CD14-positive monocyte (primary cell): ENCODE measurements at regions of chr3 and their contacts with region 1.

Region 1: GRCh38 chr3:11335056-11335608 is 62.9 kb downstream of the ATG7 start:
- DNase-seq: peak; percentile 9 to 27 (median 19)
- H3K4me3 ChIP-seq: no peak overlapping the region
- H3K4me3 Mint-ChIP-seq: no peak overlapping the region
- H3K27ac ChIP-seq: no peak overlapping the region
- H3K27ac Mint-ChIP-seq: no peak overlapping the region
- H3K4me1 ChIP-seq: no peaks in the 10 kb centered on the region
- H3K4me1 Mint-ChIP-seq: no peaks in the 10 kb centered on the region
- H3K27me3 ChIP-seq: no peaks in the 10 kb centered on the region
- H3K27me3 Mint-ChIP-seq: no peaks in the 10 kb centered on the region
- CTCF ChIP-seq: peak; percentile 61

Region 2: DNA sequence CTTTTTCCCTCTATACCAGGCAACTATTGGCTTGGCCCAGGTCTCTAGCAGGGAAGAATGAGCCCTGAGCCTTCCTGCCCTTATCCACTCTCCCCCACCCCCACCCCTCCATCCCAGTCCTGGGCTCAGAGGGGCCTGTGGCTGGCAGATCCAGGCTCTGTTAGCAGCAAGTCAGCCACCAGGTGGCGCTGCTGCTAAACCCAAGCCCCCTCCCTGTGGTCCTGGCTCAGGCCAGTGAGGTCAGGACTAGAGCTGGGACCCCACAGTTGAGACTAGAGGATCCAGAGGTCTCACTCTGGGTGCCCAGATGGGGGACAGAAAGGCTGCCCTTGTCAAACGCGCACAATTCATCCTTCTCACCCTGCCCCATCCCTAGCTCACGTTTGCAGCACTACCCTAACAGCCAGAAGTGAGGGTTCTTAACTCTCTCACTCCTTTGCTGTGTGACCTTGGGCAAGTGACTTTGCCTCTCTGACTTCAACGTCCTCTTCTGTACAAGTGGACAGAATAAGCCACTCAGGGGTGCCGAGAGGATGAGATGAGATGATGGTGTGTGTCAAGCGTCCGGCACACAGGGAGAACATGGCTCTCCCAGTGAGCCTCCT is 389.3 kb before region 1 on chr3:
- intact Hi-C with region 1: loop called in 1 of 2 experiments (anchors 10 kb)
- DNase-seq: peak; percentile 39 to 54 (median 53)
- H3K4me3 ChIP-seq: no peak overlapping the region
- H3K4me3 Mint-ChIP-seq: no peak overlapping the region
- H3K27ac ChIP-seq: no peak overlapping the region
- H3K27ac Mint-ChIP-seq: no peak overlapping the region
- H3K4me1 ChIP-seq: no peaks in the 10 kb centered on the region
- H3K4me1 Mint-ChIP-seq: no peaks in the 10 kb centered on the region
- H3K27me3 ChIP-seq: no peaks in the 10 kb centered on the region
- H3K27me3 Mint-ChIP-seq: peaks cover 2 to 10% (median 6%) of the 10 kb centered on the region in 3 donors
- CTCF ChIP-seq: peak; percentile 86

Region 3: DNA sequence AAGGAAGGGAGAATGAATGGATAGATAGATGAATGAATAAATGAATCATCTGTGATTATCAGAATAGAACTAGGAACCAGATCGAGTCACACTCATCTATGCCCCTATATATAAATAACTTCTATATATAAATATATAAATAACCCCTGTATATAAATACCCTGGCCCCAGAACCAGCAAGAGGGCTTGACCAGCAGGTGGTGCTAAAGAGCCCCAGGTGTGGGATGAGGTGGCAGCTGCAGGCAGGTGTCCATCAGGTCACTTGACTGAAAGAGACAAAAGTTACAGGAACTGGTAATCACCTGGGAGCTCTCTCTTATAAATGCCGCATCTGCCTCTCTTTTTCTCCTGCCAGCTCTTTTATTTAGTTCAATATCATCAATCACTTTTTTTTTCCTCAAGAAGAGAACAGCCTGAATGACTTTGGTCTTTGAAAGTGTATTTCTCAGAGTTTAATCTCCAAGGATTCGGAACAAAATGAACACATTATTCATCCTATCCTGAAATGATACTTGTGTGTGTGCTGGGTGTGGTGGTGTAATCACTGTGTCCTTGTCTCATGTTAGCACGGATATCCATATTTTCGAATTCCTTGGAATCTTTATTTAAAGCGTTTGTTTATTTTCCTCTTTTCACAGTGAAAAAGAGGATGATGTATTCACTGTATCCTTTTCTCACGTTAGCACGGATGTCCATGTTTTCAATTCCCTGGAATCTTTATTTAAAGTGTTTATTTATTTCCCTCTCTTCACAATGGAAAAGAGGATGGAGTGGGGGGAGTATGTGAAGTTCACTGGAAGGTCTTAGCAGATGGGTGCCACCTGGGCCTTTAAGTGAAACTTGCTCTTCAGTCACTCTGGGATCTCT is 98.3 kb before region 1 on chr3:
- intact Hi-C with region 1: no loop called
- DNase-seq: peak in 2 of 3 donors; percentile 55 to 59
- H3K4me3 ChIP-seq: no peak overlapping the region
- H3K4me3 Mint-ChIP-seq: peak overlapping the region in 1 of 2 donors; percentile 27
- H3K27ac ChIP-seq: no peak overlapping the region
- H3K27ac Mint-ChIP-seq: no peak overlapping the region
- H3K4me1 ChIP-seq: no peaks in the 10 kb centered on the region
- H3K4me1 Mint-ChIP-seq: no peaks in the 10 kb centered on the region
- H3K27me3 ChIP-seq: no peaks in the 10 kb centered on the region
- H3K27me3 Mint-ChIP-seq: peaks cover 2 to 12% (median 3%) of the 10 kb centered on the region in 3 donors
- CTCF ChIP-seq: peak; percentile 87

Region 4: GRCh38 chr3:11379233-11379823 is 44.2 kb after region 1 on chr3:
- intact Hi-C with region 1: no loop called
- DNase-seq: no peak
- H3K4me3 ChIP-seq: no peak overlapping the region
- H3K4me3 Mint-ChIP-seq: no peak overlapping the region
- H3K27ac ChIP-seq: no peak overlapping the region
- H3K27ac Mint-ChIP-seq: peak overlapping the region in 1 of 7 donors; percentile 51
- H3K4me1 ChIP-seq: no peaks in the 10 kb centered on the region
- H3K4me1 Mint-ChIP-seq: peaks cover 2% of the 10 kb centered on the region
- H3K27me3 ChIP-seq: no peaks in the 10 kb centered on the region
- H3K27me3 Mint-ChIP-seq: peaks cover 0 to 3% (median 0%) of the 10 kb centered on the region in 3 donors
- CTCF ChIP-seq: peak; percentile 54